ENCODE measurements at regions of chr6 and their contacts with region 1.

Region 1: GRCh38 chr6:26025894-26026832 is 61.1 kb upstream of the HFE start:
- DNase-seq: peak; percentile 97
- ATAC-seq: peak; percentile 41
- H3K4me3 Mint-ChIP-seq: peak overlapping the region; percentile 77
- H3K27ac Mint-ChIP-seq: peak overlapping the region; percentile 95
- H3K4me1 Mint-ChIP-seq: peaks cover 51% of the 10 kb centered on the region
- H3K27me3 Mint-ChIP-seq: peaks cover 2% of the 10 kb centered on the region
- CTCF ChIP-seq: peak; percentile 75

Region 2: DNA sequence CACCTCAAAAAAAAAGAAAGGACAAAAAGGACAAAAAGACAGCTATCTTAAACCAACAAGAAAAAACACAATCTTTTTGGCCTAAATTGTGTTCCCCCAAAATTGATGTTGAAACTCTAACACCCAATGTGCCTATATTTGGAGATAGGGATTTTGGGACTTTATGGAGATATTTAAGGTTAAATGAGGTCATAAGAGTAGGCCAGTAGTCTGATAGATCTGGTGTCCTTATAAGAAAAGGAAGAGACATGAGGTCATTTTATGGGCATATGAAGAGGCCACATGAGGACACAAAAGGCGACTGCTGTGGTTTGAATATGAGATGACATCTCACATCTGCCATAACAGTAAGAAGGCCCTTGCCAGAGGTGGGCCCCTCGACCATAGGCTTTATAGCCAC is 14.1 kb before region 1 on chr6:
- CTCF ChIA-PET with region 1: interaction called, 21 read pairs
- POLR2A ChIA-PET with region 1: interaction called, 291 read pairs
- intact Hi-C with region 1: no loop called
- DNase-seq: no peak
- ATAC-seq: no peak
- H3K4me3 Mint-ChIP-seq: no peak overlapping the region
- H3K27ac Mint-ChIP-seq: no peak overlapping the region
- H3K4me1 Mint-ChIP-seq: peaks cover 4% of the 10 kb centered on the region
- H3K27me3 Mint-ChIP-seq: no peaks in the 10 kb centered on the region
- CTCF ChIP-seq: no peak